Astrocyte of the cerebellum (primary cell): ENCODE measurements at regions of chr5 and their contacts with region 1.

Region 1: DNA sequence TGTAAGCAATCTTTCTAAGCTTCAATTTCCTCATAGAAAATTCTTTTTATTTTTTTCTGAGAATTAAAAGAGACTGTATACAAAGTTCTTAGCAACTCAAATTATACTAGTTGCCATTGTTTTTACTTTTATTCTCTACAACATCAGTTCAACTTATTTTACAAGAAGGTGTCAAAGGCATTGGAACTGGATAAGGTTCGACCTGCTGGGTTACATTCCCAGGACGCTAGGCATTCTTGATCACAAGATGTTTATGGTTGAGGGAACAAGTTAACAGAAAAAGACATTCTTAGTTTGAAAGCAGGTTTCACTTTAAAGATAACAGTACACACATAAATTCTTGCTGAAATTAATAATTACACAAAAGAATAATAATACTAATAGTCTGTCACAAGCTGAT is 163.5 kb upstream of the SNX2 start:
- DNase-seq: no peak
- H3K4me3 ChIP-seq: no peak overlapping the region
- CTCF ChIP-seq: no peak

Region 2: DNA sequence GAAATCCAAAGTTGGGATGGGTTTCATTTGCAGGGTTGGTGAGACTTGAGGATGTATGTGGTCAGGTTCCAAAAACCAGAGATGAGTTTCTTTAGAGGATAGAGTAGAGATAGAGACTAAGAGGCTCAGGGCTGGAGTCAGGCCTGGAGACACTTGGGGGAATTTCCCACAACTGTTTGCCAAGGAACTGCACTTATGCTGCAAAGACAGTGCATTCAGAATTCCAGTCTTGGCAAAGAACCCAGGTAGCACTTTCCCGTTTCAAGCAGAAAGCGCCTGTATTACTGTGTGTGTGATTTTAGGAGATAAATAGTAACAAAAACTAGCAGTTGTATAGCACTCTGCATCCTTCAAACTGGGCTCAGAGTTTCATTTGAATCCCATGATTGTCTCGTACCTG is 243.9 kb before region 1 on chr5:
- in situ Hi-C with region 1: no loop called
- DNase-seq: no peak
- H3K4me3 ChIP-seq: no peak overlapping the region
- CTCF ChIP-seq: no peak

Region 3: GRCh38 chr5:122534829-122535228 is 76.6 kb before region 1 on chr5:
- in situ Hi-C with region 1: loop called (anchors 5 kb)
- DNase-seq: no peak
- H3K4me3 ChIP-seq: no peak overlapping the region
- CTCF ChIP-seq: no peak

Region 4: GRCh38 chr5:122545986-122546385 is 65.4 kb before region 1 on chr5:
- in situ Hi-C with region 1: no loop called
- DNase-seq: no peak
- H3K4me3 ChIP-seq: no peak overlapping the region
- CTCF ChIP-seq: no peak